ENCODE measurements at regions of chr6 and their contacts with region 1.

Region 1: DNA sequence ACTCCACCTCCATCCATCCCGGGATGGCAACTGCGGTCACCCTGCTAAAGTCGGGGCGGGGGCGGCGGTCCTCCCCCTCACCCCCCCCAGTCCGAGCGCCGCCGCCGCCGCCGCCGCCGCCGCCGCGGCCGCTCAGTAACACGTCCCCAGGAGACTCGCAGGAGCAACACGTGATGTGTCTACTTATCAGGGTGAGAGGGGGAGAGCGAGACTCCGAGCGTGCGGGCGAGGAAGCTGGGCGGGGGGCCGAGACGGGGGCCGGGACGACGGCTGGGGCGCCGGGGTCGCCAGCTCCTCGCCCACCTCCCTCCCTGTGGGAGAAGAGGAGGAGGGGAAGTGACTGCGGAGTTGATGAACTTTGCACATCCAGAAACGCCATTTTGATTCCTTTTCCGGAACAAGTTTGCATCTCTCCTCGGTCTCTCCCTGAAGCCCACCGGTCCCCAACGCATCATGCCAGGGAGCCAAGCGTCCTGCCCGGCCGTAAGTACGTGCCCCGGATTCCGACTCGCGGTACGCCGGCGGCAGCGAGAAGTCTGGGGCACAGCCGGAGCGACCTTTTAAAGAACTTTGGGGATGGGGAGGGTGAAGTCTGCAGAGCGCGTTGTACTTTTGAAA is at the start of gene RREB1:
- DNase-seq: peak; percentile 72
- H3K4me3 Mint-ChIP-seq: peak within 1 kb of the TSS; percentile 88
- H3K27ac Mint-ChIP-seq: peak within 1 kb of the TSS; percentile 93
- H3K4me1 Mint-ChIP-seq: peaks cover 36% of the 10 kb centered on the region
- H3K27me3 Mint-ChIP-seq: no peaks in the 10 kb centered on the region
- total RNA-seq, gene RREB1: 13.0 to 13.5 TPM

Region 2: GRCh38 chr6:6686748-6687601 is 420.7 kb before region 1 on chr6:
- CTCF ChIA-PET with region 1: no interaction called
- POLR2A ChIA-PET with region 1: no interaction called
- intact Hi-C with region 1: loop called (anchors 5 kb)
- DNase-seq: peak; percentile 32
- H3K4me3 Mint-ChIP-seq: no peak overlapping the region
- H3K27ac Mint-ChIP-seq: no peak overlapping the region
- H3K4me1 Mint-ChIP-seq: peaks cover 33% of the 10 kb centered on the region
- H3K27me3 Mint-ChIP-seq: peaks cover 4% of the 10 kb centered on the region

Region 3: DNA sequence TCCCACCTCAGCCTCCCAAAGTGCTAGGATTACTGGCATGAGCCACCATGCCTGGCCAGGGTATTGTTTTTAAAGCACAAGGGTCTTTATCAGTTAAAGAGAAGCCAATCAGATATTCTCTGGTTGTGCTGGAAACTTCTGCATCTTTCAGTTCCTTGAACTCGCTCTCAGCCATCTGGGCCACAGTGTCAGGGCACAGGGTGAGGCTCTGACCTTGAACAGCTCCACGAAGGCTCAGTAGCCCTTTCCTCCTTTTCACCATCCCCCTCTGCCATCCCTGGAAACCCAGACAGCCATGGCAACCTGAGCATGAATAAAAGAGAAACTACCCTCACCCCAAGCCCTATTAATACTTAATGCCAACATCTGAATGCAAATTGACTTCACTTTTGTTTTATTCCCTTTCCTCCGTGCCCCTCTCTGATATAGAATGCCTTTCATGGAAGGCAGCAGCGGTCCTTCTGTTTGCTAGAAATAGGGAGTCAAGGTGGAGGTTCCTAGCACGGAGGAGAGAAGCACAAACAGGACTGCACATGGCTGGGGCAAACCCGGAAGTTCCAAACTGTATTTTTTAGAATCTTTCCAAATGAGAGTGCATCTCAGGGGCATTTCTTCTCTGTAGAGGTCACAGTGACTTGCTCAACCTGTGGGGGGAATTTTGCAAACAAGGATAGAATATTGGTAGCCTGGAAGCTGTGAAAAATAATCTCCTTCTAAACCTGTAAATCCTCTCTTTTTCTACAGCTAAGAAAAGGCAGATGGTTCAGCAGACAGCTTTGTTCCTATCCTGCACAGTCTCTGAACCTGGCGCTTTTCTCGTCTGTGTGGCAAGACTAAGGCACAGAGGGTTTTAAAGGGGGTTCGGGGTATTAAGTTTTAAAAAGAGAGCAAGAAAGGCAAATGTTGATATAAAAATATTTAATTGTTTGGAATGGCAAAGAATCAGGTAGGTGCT is 176.3 kb before region 1 on chr6:
- CTCF ChIA-PET with region 1: no interaction called
- POLR2A ChIA-PET with region 1: no interaction called
- intact Hi-C with region 1: no loop called
- DNase-seq: no peak
- H3K4me3 Mint-ChIP-seq: no peak overlapping the region
- H3K27ac Mint-ChIP-seq: no peak overlapping the region
- H3K4me1 Mint-ChIP-seq: no peaks in the 10 kb centered on the region
- H3K27me3 Mint-ChIP-seq: peaks cover 17% of the 10 kb centered on the region

Region 4: DNA sequence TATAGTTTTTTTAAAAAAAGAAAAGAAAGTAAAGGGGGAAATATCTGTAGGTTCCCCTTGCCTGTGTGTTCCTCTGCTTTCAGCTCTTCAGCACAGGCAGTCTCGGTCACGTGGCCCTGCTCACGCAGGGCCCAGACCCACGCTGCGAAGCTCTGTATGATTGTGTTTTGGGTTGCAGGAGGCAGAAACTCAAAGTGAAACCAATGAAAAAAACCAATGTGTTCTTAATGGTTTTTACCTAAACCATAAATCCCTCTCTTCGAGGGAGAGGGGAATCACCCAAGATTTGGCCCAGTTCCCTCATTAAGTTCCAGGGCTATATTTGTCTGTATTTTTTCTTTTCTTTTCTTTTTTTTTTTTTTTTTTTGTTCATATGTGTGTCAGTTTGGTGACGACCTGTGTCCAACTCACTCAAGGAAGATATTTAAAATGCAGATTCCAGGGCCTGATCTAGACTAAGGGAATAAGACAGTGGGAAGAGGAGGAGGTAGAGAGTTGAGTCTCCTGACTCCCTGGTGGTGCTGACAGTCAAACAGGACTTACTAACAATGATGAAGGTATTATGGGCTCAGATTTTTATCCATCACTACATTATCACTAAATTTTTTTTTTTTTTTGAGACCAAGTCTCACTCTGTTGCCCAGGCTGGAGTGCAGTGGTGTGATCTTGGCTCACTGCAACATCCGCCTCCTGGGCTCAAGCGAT is 33.7 kb before region 1 on chr6:
- CTCF ChIA-PET with region 1: no interaction called
- POLR2A ChIA-PET with region 1: no interaction called
- intact Hi-C with region 1: loop called (anchors 2 kb)
- DNase-seq: peak; percentile 87
- H3K4me3 Mint-ChIP-seq: peak overlapping the region; percentile 8
- H3K27ac Mint-ChIP-seq: no peak overlapping the region
- H3K4me1 Mint-ChIP-seq: peaks cover 14% of the 10 kb centered on the region
- H3K27me3 Mint-ChIP-seq: peaks cover 19% of the 10 kb centered on the region

Region 5: DNA sequence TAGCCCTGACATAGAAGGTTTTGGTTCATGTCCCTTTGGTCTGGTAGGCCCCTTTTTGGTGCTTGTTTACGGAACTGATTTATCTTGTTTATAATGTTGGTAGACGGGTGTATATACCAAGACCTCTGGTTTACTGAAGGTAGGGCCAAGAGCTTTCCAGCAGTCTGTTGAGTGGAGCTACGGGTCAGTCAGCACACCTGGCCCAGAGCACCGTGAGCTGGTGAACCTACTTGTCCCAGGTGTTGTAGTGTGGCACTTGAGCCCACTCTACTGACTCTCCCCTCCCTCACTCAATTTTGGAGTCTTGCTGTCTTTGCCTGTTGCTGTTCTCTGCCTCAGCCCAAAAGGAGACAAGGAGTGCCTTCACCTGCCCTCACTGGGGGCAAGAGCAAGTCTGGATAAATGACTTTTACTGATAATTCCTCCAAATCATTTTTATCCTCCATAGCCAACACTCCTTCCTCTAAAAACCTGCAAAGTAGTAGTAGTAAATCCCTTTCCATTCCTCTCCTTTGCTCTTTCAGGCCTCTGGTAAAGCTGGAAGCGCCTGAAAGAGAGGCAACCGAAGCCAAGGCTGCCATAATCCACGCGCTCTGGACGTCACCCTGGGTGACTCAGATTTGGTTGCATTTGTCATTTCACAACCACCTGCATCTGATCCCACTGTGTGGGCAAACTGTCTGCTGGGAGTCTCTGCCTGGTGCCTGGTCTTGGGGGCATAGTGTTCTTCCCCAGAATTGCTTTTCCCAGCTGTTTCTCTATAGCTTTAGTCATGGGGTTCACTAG is 22.3 kb after region 1 on chr6:
- CTCF ChIA-PET with region 1: no interaction called
- POLR2A ChIA-PET with region 1: interaction called, 36 read pairs
- intact Hi-C with region 1: loop called (anchors 1 kb)
- DNase-seq: peak; percentile 72
- H3K4me3 Mint-ChIP-seq: no peak overlapping the region
- H3K27ac Mint-ChIP-seq: peak overlapping the region; percentile 0
- H3K4me1 Mint-ChIP-seq: peaks cover 74% of the 10 kb centered on the region
- H3K27me3 Mint-ChIP-seq: no peaks in the 10 kb centered on the region

Region 6: GRCh38 chr6:7154341-7155139 is 46.9 kb after region 1 on chr6:
- CTCF ChIA-PET with region 1: no interaction called
- POLR2A ChIA-PET with region 1: interaction called, 3 read pairs
- intact Hi-C with region 1: loop called (anchors 1 kb)
- DNase-seq: peak; percentile 22
- H3K4me3 Mint-ChIP-seq: no peak overlapping the region
- H3K27ac Mint-ChIP-seq: no peak overlapping the region
- H3K4me1 Mint-ChIP-seq: peaks cover 78% of the 10 kb centered on the region
- H3K27me3 Mint-ChIP-seq: no peaks in the 10 kb centered on the region

Region 7: DNA sequence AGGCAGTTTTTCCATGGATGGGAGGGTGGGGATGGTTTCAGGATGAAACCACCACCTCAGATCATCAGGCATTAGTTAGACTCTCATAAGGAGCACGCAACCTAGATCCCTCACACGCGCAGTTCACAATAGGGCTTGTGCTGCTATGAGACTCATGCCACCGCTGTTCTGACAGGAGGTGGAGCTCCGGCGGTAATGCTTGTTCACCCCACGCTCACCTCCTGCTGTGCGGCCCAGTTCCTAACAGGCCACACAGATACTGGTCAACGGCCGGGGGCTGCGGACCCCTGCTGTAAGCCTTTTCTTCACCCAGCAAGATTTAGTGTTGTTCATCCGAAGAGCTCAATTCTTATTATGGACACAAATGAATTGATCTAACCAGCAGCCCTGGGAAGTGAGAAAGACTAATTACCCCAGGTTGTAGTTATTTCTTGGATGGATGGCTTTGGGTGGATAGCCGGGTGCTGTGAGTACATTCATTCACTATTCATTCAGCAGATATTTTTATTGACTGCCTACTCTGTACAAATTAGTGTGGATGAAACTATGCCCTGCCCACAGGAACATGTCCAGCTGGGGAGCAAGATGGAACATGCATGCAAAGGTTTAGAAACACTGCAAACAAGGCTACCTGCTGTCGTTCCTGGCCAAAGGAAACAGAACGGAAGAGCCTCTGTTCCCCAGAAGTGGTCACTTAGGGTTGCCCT is 339.1 kb after region 1 on chr6:
- CTCF ChIA-PET with region 1: no interaction called
- POLR2A ChIA-PET with region 1: no interaction called
- intact Hi-C with region 1: no loop called
- DNase-seq: no peak
- H3K4me3 Mint-ChIP-seq: no peak overlapping the region
- H3K27ac Mint-ChIP-seq: no peak overlapping the region
- H3K4me1 Mint-ChIP-seq: no peaks in the 10 kb centered on the region
- H3K27me3 Mint-ChIP-seq: peaks cover 1% of the 10 kb centered on the region

Measured in activated CD4-positive, alpha-beta memory T cell treated with anti-CD3 and anti-CD28 coated beads for 36 hours (primary cell).